ENCODE measurements at regions of chr6 and their contacts with region 1.

Region 1: GRCh38 chr6:24581084-24581669 is 64.8 kb downstream of the KIAA0319 start:
- DNase-seq: peak; percentile 57
- H3K4me3 ChIP-seq: no peak overlapping the region; a peak in 1 of 4 replicates
- H3K27ac ChIP-seq: no peak overlapping the region
- H3K4me1 ChIP-seq: peaks cover 5 to 13% of the 10 kb centered on the region in 2 experiments; a peak in 2 of 4 replicates
- H3K27me3 ChIP-seq: no peaks in the 10 kb centered on the region; the same call in 1 of the 2 replicates
- CTCF ChIP-seq: peak; percentile 86
- EP300 ChIP-seq: no peak
- RAD21 ChIP-seq: peak; percentile 82

Region 2: GRCh38 chr6:24520929-24521546 is 60.1 kb before region 1 on chr6:
- CTCF ChIA-PET with region 1: interaction called, 17 read pairs
- POLR2A ChIA-PET with region 1: no interaction called
- DNase-seq: peak; percentile 63
- H3K4me3 ChIP-seq: no peak overlapping the region
- H3K27ac ChIP-seq: no peak overlapping the region
- H3K4me1 ChIP-seq: no peaks in the 10 kb centered on the region
- H3K27me3 ChIP-seq: no peaks in the 10 kb centered on the region
- CTCF ChIP-seq: peak; percentile 71
- EP300 ChIP-seq: no peak
- RAD21 ChIP-seq: peak; percentile 63

Region 3: GRCh38 chr6:24566020-24566767 is 15.0 kb before region 1 on chr6:
- CTCF ChIA-PET with region 1: interaction called, 54 read pairs
- POLR2A ChIA-PET with region 1: no interaction called
- DNase-seq: no peak
- H3K4me3 ChIP-seq: no peak overlapping the region
- H3K27ac ChIP-seq: no peak overlapping the region
- H3K4me1 ChIP-seq: no peaks in the 10 kb centered on the region
- H3K27me3 ChIP-seq: no peaks in the 10 kb centered on the region
- CTCF ChIP-seq: no peak
- EP300 ChIP-seq: no peak
- RAD21 ChIP-seq: no peak

Region 4: DNA sequence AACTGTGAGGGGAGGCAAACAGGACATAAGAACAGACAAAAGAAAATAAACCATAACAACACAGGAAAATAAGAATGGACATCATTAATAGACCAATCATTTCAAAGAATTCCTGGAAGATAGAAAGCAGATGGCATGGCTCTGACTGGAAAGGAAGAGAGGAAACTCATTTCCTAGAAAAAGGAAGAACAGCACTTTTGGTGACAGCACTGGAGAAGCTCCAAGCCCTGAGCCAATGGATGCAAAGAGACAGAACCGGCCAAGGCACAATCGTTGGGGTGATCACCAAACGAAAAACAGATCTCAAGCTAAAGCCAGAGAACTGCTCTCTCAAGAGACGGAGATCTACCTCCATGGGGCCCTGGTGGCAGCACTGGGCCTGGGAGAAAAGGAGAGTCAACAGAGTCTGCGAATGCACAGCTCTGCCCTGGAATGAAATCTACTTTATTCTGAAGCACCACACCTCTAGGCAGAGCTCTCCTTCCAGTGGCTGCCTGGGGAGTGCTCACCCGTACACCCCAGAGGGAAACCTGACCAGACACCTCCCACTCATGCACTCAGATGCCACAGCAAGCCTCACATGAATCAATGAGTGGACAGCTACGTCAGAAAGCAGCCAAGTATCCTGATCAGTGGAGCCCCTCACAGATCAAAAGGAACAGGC is 40.6 kb after region 1 on chr6:
- CTCF ChIA-PET with region 1: interaction called, 12 read pairs
- POLR2A ChIA-PET with region 1: no interaction called
- DNase-seq: no peak
- H3K4me3 ChIP-seq: no peak overlapping the region
- H3K27ac ChIP-seq: no peak overlapping the region
- H3K4me1 ChIP-seq: no peaks in the 10 kb centered on the region
- H3K27me3 ChIP-seq: no peaks in the 10 kb centered on the region
- CTCF ChIP-seq: no peak
- EP300 ChIP-seq: no peak
- RAD21 ChIP-seq: no peak

Region 5: DNA sequence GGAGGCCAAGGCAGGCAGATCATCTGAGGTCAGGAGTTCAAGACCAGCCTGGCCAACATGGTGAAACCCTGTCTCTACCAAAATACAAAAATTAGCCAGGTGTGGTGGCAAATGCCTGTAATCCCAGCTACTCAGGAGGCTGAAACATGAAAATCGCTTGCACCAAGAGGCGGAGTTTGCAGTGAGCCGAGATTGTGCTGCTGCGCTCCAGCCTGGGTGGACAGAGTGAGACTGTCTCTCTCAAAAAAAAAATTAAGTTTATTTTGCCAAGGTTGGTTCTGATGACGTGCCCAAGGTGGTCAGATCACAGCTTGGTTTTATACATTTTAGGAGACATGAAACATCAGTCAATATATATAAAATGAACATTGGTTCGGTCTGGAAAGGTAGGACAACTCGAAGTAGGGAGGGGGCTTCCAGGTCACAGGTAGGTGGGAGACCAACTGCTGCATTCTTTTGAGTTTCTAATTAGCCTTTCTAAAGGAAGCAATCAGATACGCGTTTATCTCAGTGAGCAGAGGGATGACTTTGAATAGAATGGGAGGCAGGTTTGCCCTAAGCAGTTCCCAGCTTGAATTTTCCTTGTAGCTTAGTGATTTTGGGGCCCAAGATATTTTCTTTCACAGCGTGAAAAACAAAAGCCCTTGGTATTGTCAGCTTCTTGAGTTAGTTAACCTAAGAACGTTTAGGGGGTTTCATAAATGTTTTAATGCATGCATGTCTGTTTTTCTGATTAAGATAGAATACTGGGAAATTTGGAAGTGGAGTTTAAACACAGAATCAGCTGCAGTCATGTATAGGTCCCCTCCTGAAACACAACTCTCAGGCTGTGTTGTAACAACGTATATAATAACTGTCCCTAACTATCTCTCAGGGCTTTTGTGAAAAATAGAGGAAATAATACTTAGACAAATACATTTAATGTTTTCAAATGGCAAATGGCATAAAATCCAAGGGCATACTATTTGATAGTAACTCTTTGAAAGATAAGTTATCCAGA is 102.4 kb after region 1 on chr6:
- CTCF ChIA-PET with region 1: interaction called, 28 read pairs
- POLR2A ChIA-PET with region 1: interaction called, 3 read pairs
- DNase-seq: no peak
- H3K4me3 ChIP-seq: no peak overlapping the region
- H3K27ac ChIP-seq: peak overlapping the region in 1 of 2 experiments; percentile 39; a peak in 1 of 4 replicates
- H3K4me1 ChIP-seq: no peaks in the 10 kb centered on the region
- H3K27me3 ChIP-seq: no peaks in the 10 kb centered on the region
- CTCF ChIP-seq: no peak
- EP300 ChIP-seq: no peak
- RAD21 ChIP-seq: no peak

Region 6: GRCh38 chr6:24752917-24753490 is 171.8 kb after region 1 on chr6:
- CTCF ChIA-PET with region 1: no interaction called
- POLR2A ChIA-PET with region 1: no interaction called
- DNase-seq: no peak
- H3K4me3 ChIP-seq: no peak overlapping the region
- H3K27ac ChIP-seq: no peak overlapping the region
- H3K4me1 ChIP-seq: no peaks in the 10 kb centered on the region
- H3K27me3 ChIP-seq: no peaks in the 10 kb centered on the region
- CTCF ChIP-seq: no peak
- EP300 ChIP-seq: no peak
- RAD21 ChIP-seq: no peak

Region 7: GRCh38 chr6:24864343-24864742 is 283.2 kb after region 1 on chr6:
- CTCF ChIA-PET with region 1: no interaction called
- POLR2A ChIA-PET with region 1: no interaction called
- DNase-seq: no peak
- H3K4me3 ChIP-seq: no peak overlapping the region
- H3K27ac ChIP-seq: no peak overlapping the region
- H3K4me1 ChIP-seq: no peaks in the 10 kb centered on the region; a peak in 1 of 4 replicates
- H3K27me3 ChIP-seq: no peaks in the 10 kb centered on the region
- CTCF ChIP-seq: no peak
- EP300 ChIP-seq: no peak
- RAD21 ChIP-seq: no peak

Region 8: GRCh38 chr6:25070547-25071366 is 489.6 kb after region 1 on chr6:
- CTCF ChIA-PET with region 1: interaction called, 11 read pairs
- POLR2A ChIA-PET with region 1: no interaction called
- DNase-seq: peak; percentile 68
- H3K4me3 ChIP-seq: peak overlapping the region; percentile 33 to 46; a peak in 2 of 4 replicates
- H3K27ac ChIP-seq: no peak overlapping the region; a peak in 1 of 4 replicates
- H3K4me1 ChIP-seq: peaks cover 0 to 2% of the 10 kb centered on the region in 2 experiments; a peak in 2 of 4 replicates
- H3K27me3 ChIP-seq: no peaks in the 10 kb centered on the region
- CTCF ChIP-seq: peak; percentile 96
- EP300 ChIP-seq: no peak
- RAD21 ChIP-seq: peak; percentile 98

Region 9: GRCh38 chr6:25138237-25139125 is 557.3 kb after region 1 on chr6:
- CTCF ChIA-PET with region 1: no interaction called
- POLR2A ChIA-PET with region 1: no interaction called
- DNase-seq: peak; percentile 37
- H3K4me3 ChIP-seq: peak overlapping the region; percentile 42 to 56
- H3K27ac ChIP-seq: peak overlapping the region; percentile 79 to 93
- H3K4me1 ChIP-seq: peaks cover 0 to 15% of the 10 kb centered on the region in 2 experiments; a peak in 2 of 4 replicates
- H3K27me3 ChIP-seq: no peaks in the 10 kb centered on the region
- CTCF ChIP-seq: peak; percentile 43
- EP300 ChIP-seq: no peak
- RAD21 ChIP-seq: peak; percentile 24; the same call in 1 of the 2 replicates

Measured in SK-N-SH (cell line).